ENCODE measurements at regions of chr11 and their contacts with region 1.

Region 1: GRCh38 chr11:134223836-134224709 is at the starts of genes NCAPD3 and VPS26B:
- DNase-seq: peak; percentile 91 to 96 (median 94)
- ATAC-seq: peak; percentile 89
- H3K4me3 ChIP-seq: peak within 1 kb of the TSS; percentile 94
- H3K4me3 Mint-ChIP-seq: peak within 1 kb of the TSS; percentile 95 to 98 (median 97)
- H3K27ac ChIP-seq: peak within 1 kb of the TSS; percentile 92
- H3K27ac Mint-ChIP-seq: peak within 1 kb of the TSS; percentile 98 to 99 (median 99)
- H3K4me1 ChIP-seq: peaks cover 41 to 43% of the 10 kb centered on the region in 2 donors
- H3K4me1 Mint-ChIP-seq: peaks cover 38 to 64% (median 55%) of the 10 kb centered on the region in 7 donors
- H3K27me3 ChIP-seq: no peaks in the 10 kb centered on the region
- H3K27me3 Mint-ChIP-seq: peaks cover 0 to 4% (median 0%) of the 10 kb centered on the region in 5 donors
- total RNA-seq, gene NCAPD3: 31.5 to 90.9 (median 40.3) TPM
- total RNA-seq, gene VPS26B: 50.9 to 69.2 (median 61.8) TPM

Region 2: GRCh38 chr11:133892584-133893380 is 331.3 kb before region 1 on chr11:
- CTCF ChIA-PET with region 1: no interaction called
- POLR2A ChIA-PET with region 1: no interaction called
- intact Hi-C with region 1: no loop called
- DNase-seq: no peak
- ATAC-seq: no peak
- H3K4me3 ChIP-seq: no peak overlapping the region
- H3K4me3 Mint-ChIP-seq: no peak overlapping the region
- H3K27ac ChIP-seq: no peak overlapping the region
- H3K27ac Mint-ChIP-seq: no peak overlapping the region
- H3K4me1 ChIP-seq: no peaks in the 10 kb centered on the region
- H3K4me1 Mint-ChIP-seq: peaks cover 0 to 4% (median 0%) of the 10 kb centered on the region in 7 donors
- H3K27me3 ChIP-seq: no peaks in the 10 kb centered on the region
- H3K27me3 Mint-ChIP-seq: peaks cover 5 to 25% (median 21%) of the 10 kb centered on the region in 5 donors

Region 3: DNA sequence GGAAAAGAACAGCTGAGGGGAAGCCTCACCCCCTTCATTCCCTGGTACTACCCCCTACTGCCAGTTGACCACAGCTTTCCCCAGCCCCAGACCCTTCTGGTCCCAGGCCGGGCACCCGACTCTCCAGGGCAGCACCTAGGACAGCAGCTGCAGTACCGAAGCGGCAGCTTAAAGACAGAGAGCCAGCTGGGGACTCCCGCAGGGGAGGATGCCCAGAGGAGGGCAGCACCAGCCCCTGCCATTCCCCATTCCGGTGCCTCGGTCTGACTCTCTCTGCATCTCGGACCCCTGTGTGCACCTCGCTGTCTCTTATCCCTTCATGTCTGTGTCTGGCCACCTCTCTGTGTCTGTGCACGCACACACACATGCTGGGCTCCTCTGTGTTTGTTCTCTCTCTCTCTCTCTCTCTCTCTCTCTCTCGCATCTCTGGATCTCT is 276.7 kb before region 1 on chr11:
- CTCF ChIA-PET with region 1: no interaction called
- POLR2A ChIA-PET with region 1: interaction called, 8 read pairs
- intact Hi-C with region 1: loop called in 1 of 2 experiments (anchors 1 kb)
- DNase-seq: peak; percentile 49 to 76 (median 74)
- ATAC-seq: peak; percentile 66
- H3K4me3 ChIP-seq: peak overlapping the region; percentile 39
- H3K4me3 Mint-ChIP-seq: peak overlapping the region; percentile 50 to 97 (median 76)
- H3K27ac ChIP-seq: peak overlapping the region; percentile 44
- H3K27ac Mint-ChIP-seq: peak overlapping the region; percentile 60 to 94 (median 85)
- H3K4me1 ChIP-seq: peaks cover 50 to 60% of the 10 kb centered on the region in 2 donors
- H3K4me1 Mint-ChIP-seq: peaks cover 41 to 76% (median 64%) of the 10 kb centered on the region in 7 donors
- H3K27me3 ChIP-seq: no peaks in the 10 kb centered on the region
- H3K27me3 Mint-ChIP-seq: no peaks in the 10 kb centered on the region

Region 4: DNA sequence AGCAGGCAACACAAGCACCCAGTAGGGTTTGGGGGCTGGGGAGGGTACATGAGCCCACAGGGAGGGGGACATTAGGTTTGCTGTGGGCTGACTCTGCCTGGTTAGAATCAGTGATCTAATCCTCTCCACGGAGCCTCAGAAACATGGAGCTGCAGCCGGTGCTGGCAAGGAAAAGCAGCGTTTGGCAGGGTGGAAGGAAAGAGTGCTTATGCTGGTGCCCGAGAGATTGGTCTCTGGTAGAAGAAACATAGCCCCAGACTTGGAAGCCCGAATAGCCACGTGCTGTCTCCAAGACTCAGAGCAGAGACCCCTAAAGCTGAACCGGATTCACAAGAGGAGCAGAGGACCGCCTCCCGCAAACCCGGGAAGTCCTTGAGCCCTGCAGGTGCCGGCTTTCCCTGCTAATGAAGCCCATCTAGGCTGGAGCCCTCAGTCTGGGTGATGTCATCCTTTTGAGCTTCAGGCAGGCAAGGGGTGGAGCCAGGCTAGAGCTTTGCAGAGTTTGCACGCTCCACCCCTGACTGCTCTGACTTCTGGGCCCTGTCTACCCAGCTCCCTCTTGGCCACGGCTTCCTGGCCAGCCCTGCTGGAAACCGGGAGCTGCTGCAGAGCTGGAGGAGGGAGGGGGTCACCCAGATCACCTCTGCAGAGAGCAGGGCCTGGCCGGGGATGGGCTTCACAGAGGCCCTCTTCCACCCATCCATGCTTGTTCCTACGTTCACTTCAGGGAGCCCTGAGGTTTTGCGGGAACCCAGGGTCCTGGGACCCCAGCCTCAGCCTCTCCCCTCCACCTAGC is 190.2 kb before region 1 on chr11:
- CTCF ChIA-PET with region 1: no interaction called
- POLR2A ChIA-PET with region 1: interaction called, 3 read pairs
- intact Hi-C with region 1: loop called (anchors 1 to 10 kb)
- DNase-seq: peak in 8 of 9 donors; percentile 38 to 74 (median 60)
- ATAC-seq: peak; percentile 77
- H3K4me3 ChIP-seq: peak overlapping the region; percentile 25
- H3K4me3 Mint-ChIP-seq: peak overlapping the region; percentile 63 to 95 (median 75)
- H3K27ac ChIP-seq: peak overlapping the region; percentile 67
- H3K27ac Mint-ChIP-seq: peak overlapping the region; percentile 74 to 98 (median 85)
- H3K4me1 ChIP-seq: peaks cover 29 to 46% of the 10 kb centered on the region in 2 donors
- H3K4me1 Mint-ChIP-seq: peaks cover 33 to 79% (median 65%) of the 10 kb centered on the region in 7 donors
- H3K27me3 ChIP-seq: no peaks in the 10 kb centered on the region
- H3K27me3 Mint-ChIP-seq: peaks cover 0 to 24% (median 0%) of the 10 kb centered on the region in 5 donors

Region 5: GRCh38 chr11:134207538-134208239 is 16.4 kb before region 1 on chr11:
- CTCF ChIA-PET with region 1: no interaction called
- POLR2A ChIA-PET with region 1: interaction called, 24 read pairs
- intact Hi-C with region 1: loop called (anchors 1 kb)
- DNase-seq: peak; percentile 36 to 67 (median 62)
- ATAC-seq: no peak
- H3K4me3 ChIP-seq: no peak overlapping the region
- H3K4me3 Mint-ChIP-seq: peak overlapping the region in 1 of 10 donors; percentile 34
- H3K27ac ChIP-seq: no peak overlapping the region
- H3K27ac Mint-ChIP-seq: no peak overlapping the region
- H3K4me1 ChIP-seq: no peaks in the 10 kb centered on the region
- H3K4me1 Mint-ChIP-seq: peaks cover 2 to 14% (median 7%) of the 10 kb centered on the region in 7 donors
- H3K27me3 ChIP-seq: no peaks in the 10 kb centered on the region
- H3K27me3 Mint-ChIP-seq: no peaks in the 10 kb centered on the region

Region 6: DNA sequence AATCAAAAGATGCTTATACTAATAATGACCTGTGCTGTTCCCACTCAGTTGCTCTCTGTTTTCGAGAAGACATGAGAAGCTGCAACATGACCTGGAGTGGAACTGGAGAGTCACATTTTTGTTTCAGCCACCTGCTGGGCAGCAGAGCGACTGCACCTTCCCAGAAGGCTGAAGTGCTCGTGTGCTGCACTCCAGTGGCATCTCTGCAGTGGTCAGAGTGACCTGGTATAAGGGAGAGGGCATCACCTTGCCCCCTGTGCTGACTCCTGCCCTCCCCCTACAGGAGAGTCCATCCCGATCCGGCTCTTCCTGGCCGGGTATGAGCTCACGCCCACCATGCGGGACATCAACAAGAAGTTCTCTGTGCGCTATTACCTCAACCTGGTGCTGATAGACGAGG is 20.6 kb after region 1 on chr11:
- CTCF ChIA-PET with region 1: interaction called, 5 read pairs
- POLR2A ChIA-PET with region 1: interaction called, 111 read pairs
- intact Hi-C with region 1: loop called in 1 of 2 experiments (anchors 2 kb)
- DNase-seq: peak in 4 of 9 donors; percentile 16 to 41 (median 21)
- ATAC-seq: peak; percentile 63
- H3K4me3 ChIP-seq: no peak overlapping the region
- H3K4me3 Mint-ChIP-seq: no peak overlapping the region
- H3K27ac ChIP-seq: no peak overlapping the region
- H3K27ac Mint-ChIP-seq: peak overlapping the region in 2 of 9 donors; percentile 19 to 43
- H3K4me1 ChIP-seq: no peaks in the 10 kb centered on the region
- H3K4me1 Mint-ChIP-seq: peaks cover 0 to 9% (median 0%) of the 10 kb centered on the region in 7 donors
- H3K27me3 ChIP-seq: no peaks in the 10 kb centered on the region
- H3K27me3 Mint-ChIP-seq: no peaks in the 10 kb centered on the region

Region 7: GRCh38 chr11:134270250-134270714 is 46.2 kb after region 1 on chr11:
- CTCF ChIA-PET with region 1: no interaction called
- POLR2A ChIA-PET with region 1: interaction called, 16 read pairs
- intact Hi-C with region 1: no loop called
- DNase-seq: peak in 7 of 9 donors; percentile 12 to 48 (median 31)
- ATAC-seq: peak; percentile 68
- H3K4me3 ChIP-seq: no peak overlapping the region
- H3K4me3 Mint-ChIP-seq: peak overlapping the region in 9 of 10 donors; percentile 16 to 75 (median 59)
- H3K27ac ChIP-seq: no peak overlapping the region
- H3K27ac Mint-ChIP-seq: peak overlapping the region in 8 of 9 donors; percentile 3 to 81 (median 44)
- H3K4me1 ChIP-seq: peaks cover 30 to 41% of the 10 kb centered on the region in 2 donors
- H3K4me1 Mint-ChIP-seq: peaks cover 34 to 73% (median 52%) of the 10 kb centered on the region in 7 donors
- H3K27me3 ChIP-seq: no peaks in the 10 kb centered on the region
- H3K27me3 Mint-ChIP-seq: peaks cover 0 to 2% (median 0%) of the 10 kb centered on the region in 5 donors

Region 8: GRCh38 chr11:134331354-134332188 is 107.5 kb after region 1 on chr11 and contains the start of gene GLB1L2:
- CTCF ChIA-PET with region 1: no interaction called
- POLR2A ChIA-PET with region 1: interaction called, 9 read pairs
- intact Hi-C with region 1: loop called (anchors 1 kb)
- DNase-seq: peak; percentile 68 to 88 (median 78)
- ATAC-seq: peak; percentile 96
- H3K4me3 ChIP-seq: peak within 1 kb of the TSS; percentile 66
- H3K4me3 Mint-ChIP-seq: peak within 1 kb of the TSS; percentile 84 to 94 (median 88)
- H3K27ac ChIP-seq: no peak within 1 kb of the TSS
- H3K27ac Mint-ChIP-seq: peak within 1 kb of the TSS in 7 of 9 donors; percentile 25 to 89 (median 66)
- H3K4me1 ChIP-seq: peaks cover 7 to 9% of the 10 kb centered on the region in 2 donors
- H3K4me1 Mint-ChIP-seq: peaks cover 3 to 19% (median 17%) of the 10 kb centered on the region in 7 donors
- H3K27me3 ChIP-seq: no peaks in the 10 kb centered on the region
- H3K27me3 Mint-ChIP-seq: peaks cover 5 to 60% (median 9%) of the 10 kb centered on the region in 5 donors
- total RNA-seq, gene GLB1L2: 0.34 to 2.4 (median 1.7) TPM

Measured in naive thymus-derived CD4-positive, alpha-beta T cell (primary cell).